Heart right ventricle (tissue), 16 donors: ENCODE measurements at regions of chr20 and their contacts with region 1.

Region 1: GRCh38 chr20:5950271-5951031 is at the starts of genes MCM8 and TRMT6:
- DNase-seq: peak; percentile 95
- ATAC-seq: peak; percentile 100
- H3K4me3 ChIP-seq: peak within 1 kb of the TSS; percentile 69 to 98 (median 84)
- H3K27ac ChIP-seq: peak within 1 kb of the TSS in 9 of 10 donors; percentile 59 to 87 (median 77)
- H3K4me1 ChIP-seq: peaks cover 0 to 37% (median 19%) of the 10 kb centered on the region in 9 donors
- H3K27me3 ChIP-seq: no peaks in the 10 kb centered on the region
- CTCF ChIP-seq: peak in 1 of 9 donors; percentile 8
- total RNA-seq, gene MCM8: 6.1 to 8.9 (median 6.4) TPM
- total RNA-seq, gene TRMT6: 7.6 to 12.8 (median 9.2) TPM

Region 2: GRCh38 chr20:5539691-5540090 is 410.8 kb before region 1 on chr20:
- intact Hi-C with region 1: no loop called
- DNase-seq: no peak
- ATAC-seq: no peak
- H3K4me3 ChIP-seq: no peak overlapping the region
- H3K27ac ChIP-seq: no peak overlapping the region
- H3K4me1 ChIP-seq: peaks cover 0 to 27% (median 0%) of the 10 kb centered on the region in 9 donors
- H3K27me3 ChIP-seq: no peaks in the 10 kb centered on the region
- CTCF ChIP-seq: no peak

Region 3: DNA sequence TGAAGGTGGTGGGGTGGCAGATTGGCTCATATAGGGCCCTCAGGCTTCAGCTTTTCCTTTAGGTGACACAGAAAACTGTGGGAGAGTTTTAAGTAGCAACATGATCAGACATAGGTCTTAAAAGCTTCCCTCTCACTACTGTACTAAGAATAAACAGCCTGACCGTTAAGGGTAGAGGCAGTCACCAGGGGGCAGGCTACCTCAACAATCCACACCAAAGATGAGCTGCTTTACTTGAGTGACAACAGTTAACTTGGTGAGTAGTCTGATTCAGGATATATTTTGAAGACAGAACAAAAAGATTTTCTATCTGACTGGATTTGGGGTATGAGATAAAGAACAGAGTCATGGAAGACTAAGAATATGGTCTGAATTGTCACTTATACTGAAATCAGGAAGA is 393.3 kb before region 1 on chr20:
- intact Hi-C with region 1: loop called in 2 of 10 experiments (anchors 10 kb)
- DNase-seq: peak; percentile 23 to 41
- ATAC-seq: peak in 6 of 8 donors; percentile 56 to 78 (median 68)
- H3K4me3 ChIP-seq: no peak overlapping the region
- H3K27ac ChIP-seq: no peak overlapping the region
- H3K4me1 ChIP-seq: no peaks in the 10 kb centered on the region
- H3K27me3 ChIP-seq: no peaks in the 10 kb centered on the region
- CTCF ChIP-seq: peak in 8 of 9 donors; percentile 12 to 67 (median 59)

Region 4: DNA sequence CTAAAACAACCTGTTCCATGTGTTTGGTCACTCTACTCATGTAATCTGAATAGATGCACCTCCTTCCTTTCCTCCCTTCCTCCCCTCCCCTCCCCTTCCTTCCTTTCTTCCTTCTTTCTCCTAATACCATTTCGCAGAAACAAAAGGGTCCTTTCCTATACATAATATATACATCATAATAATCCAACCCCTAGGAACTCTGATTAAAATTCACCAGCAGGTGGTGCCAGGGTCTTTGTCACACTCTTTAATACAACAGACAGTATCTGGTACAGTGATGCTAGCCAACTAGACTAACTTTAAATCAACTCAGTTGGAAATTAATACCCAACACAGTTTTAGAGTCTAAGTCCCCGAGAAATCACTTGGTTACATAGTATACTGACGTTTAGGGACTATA is 381.4 kb before region 1 on chr20:
- intact Hi-C with region 1: loop called in 1 of 10 experiments (anchors 10 kb)
- DNase-seq: peak in 1 of 2 donors; percentile 44
- ATAC-seq: peak in 4 of 8 donors; percentile 58 to 67 (median 64)
- H3K4me3 ChIP-seq: no peak overlapping the region
- H3K27ac ChIP-seq: peak overlapping the region in 1 of 10 donors; percentile 72
- H3K4me1 ChIP-seq: peaks cover 0 to 40% (median 0%) of the 10 kb centered on the region in 9 donors
- H3K27me3 ChIP-seq: no peaks in the 10 kb centered on the region
- CTCF ChIP-seq: peak; percentile 17 to 67 (median 51)